ENCODE measurements at regions of chr7 and their contacts with region 1.

Region 1: DNA sequence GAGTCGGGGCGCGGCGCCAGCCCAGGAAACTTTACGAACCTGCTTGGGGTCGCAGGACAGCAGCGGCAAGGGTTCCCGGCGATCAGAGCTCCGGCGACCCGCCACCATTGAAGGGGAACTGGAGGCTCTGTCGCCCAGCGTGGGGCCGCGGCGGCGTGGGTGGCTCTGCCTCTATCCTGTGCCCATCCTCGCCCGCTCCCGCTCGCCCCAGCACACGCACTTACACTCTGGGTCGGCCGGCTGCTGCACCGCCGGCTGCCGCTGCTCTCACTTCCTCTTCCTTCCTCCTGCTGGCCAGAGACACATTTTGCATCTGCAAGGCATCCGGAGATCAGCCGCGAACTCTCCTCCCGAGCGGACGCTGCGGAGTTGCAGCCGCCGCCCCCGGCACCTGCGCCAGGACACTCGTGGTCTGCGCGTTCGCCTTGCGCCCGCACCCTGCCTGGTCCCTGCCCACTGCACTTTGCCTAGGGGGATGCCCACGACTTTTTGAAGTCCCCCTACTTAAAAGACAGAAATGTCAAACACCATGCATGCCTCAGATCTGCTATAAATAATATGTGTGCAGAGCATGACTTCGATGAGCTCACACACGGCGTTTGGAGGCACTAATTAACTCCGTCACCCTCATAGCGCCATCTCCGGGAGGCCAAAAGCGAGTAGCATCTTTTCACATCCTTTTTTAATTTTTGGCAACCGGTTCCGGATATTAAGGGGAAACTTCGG is at the start of gene ELMO1:
- DNase-seq: no peak
- H3K4me3 ChIP-seq: peak within 1 kb of the TSS; percentile 84 to 96
- H3K27ac ChIP-seq: peak within 1 kb of the TSS; percentile 85
- H3K4me1 ChIP-seq: peaks cover 18% of the 10 kb centered on the region
- H3K27me3 ChIP-seq: no peaks in the 10 kb centered on the region
- CTCF ChIP-seq: peak in 2 of 3 experiments; percentile 25 to 53
- POLR2A ChIP-seq: peak in 1 of 2 donors; percentile 72
- total RNA-seq, gene ELMO1: 74.4 TPM

Region 2: GRCh38 chr7:37208528-37208927 is 240.3 kb before region 1 on chr7:
- intact Hi-C with region 1: loop called (anchors 2 kb)
- DNase-seq: peak in 1 of 2 donors; percentile 94
- H3K4me3 ChIP-seq: no peak overlapping the region
- H3K27ac ChIP-seq: peak overlapping the region; percentile 74
- H3K4me1 ChIP-seq: peaks cover 28% of the 10 kb centered on the region
- H3K27me3 ChIP-seq: no peaks in the 10 kb centered on the region
- CTCF ChIP-seq: peak in 1 of 3 experiments; percentile 14
- POLR2A ChIP-seq: no peak

Region 3: GRCh38 chr7:37284805-37285231 is 164.0 kb before region 1 on chr7:
- intact Hi-C with region 1: loop called (anchors 10 kb)
- DNase-seq: peak in 1 of 2 donors; percentile 86
- H3K4me3 ChIP-seq: no peak overlapping the region
- H3K27ac ChIP-seq: peak overlapping the region; percentile 29
- H3K4me1 ChIP-seq: peaks cover 65% of the 10 kb centered on the region
- H3K27me3 ChIP-seq: no peaks in the 10 kb centered on the region
- CTCF ChIP-seq: peak in 2 of 3 experiments; percentile 4 to 60
- POLR2A ChIP-seq: no peak

Measured in vagina (tissue), 2 donors.